ENCODE measurements at regions of chr12 and their contacts with region 1.

Region 1: GRCh38 chr12:8226355-8226754 is 1.1 kb downstream of the FAM90A1 start:
- DNase-seq: no peak
- H3K4me3 ChIP-seq: no peak overlapping the region
- H3K27ac ChIP-seq: no peak overlapping the region
- H3K4me1 ChIP-seq: no peaks in the 10 kb centered on the region
- H3K27me3 ChIP-seq: no peaks in the 10 kb centered on the region
- CTCF ChIP-seq: no peak
- POLR2A ChIP-seq: no peak

Region 2: DNA sequence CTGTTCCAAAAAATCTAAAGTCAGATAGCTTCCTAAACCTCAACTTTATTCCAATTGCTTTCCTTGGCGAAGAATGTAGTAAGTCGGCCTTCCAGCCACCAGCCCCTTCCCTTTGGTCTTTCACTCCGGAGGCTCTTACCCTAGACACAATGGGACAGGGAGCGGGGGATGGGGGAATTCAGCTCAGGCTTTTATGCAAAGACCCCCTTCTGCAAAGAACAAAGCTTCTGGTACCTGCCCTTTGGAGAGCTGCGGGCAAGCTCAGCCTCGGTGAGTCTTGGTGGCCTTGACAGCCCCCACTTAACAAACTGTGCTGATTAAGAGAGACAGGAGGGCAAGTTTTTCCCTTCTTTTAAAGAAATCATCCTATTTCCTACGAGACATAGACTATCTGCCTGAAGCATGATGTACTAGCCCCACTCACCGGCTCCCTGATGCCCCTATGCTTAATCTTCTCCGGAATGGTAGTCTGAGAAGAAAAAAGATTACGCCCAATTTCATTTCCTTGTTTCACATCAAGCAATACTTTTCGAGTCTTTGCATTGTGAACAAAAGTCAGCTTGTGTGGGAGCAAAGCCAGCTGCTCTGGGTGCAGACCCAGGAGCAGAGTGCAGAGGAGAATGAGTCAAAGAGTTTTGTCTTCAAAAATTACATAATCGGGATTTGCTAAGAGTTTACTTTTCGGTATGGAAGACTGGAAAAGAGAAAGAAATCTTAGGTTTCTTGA is 438.6 kb before region 1 on chr12:
- intact Hi-C with region 1: no loop called
- DNase-seq: no peak
- H3K4me3 ChIP-seq: no peak overlapping the region
- H3K27ac ChIP-seq: no peak overlapping the region
- H3K4me1 ChIP-seq: no peaks in the 10 kb centered on the region
- H3K27me3 ChIP-seq: no peaks in the 10 kb centered on the region
- CTCF ChIP-seq: no peak
- POLR2A ChIP-seq: no peak

Region 3: DNA sequence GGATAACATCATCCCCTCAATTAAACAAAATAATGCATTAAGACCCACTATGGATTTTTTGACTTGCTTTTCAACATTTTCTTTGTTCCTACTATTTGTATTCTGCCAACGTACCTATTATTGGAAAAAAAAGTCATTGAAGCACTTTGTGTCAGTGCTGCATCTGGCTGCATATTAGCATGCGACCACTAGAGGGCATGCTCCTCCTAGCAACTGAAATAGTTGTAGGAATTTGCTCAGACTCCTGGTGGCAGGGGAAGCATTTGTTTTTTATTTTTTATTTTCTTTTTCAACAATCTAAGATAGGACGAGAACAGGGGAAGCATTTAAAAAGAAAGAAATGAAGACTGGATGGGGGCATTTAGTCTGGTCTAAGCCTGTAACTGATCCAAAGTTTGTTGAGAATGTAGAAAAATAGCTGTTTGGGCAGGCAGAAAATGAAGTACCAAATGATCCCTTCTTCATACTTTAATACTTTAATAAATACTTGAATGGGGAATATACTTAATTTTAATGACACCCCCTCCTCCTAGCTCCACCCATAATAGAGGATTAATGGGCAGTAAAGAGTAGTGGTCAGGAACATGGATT is 117.5 kb before region 1 on chr12:
- intact Hi-C with region 1: loop called (anchors 5 kb)
- DNase-seq: peak; percentile 75 to 78
- H3K4me3 ChIP-seq: no peak overlapping the region
- H3K27ac ChIP-seq: no peak overlapping the region
- H3K4me1 ChIP-seq: no peaks in the 10 kb centered on the region
- H3K27me3 ChIP-seq: no peaks in the 10 kb centered on the region
- CTCF ChIP-seq: peak; percentile 83 to 99 (median 95)
- POLR2A ChIP-seq: no peak

Measured in thyroid gland (tissue), 4 donors.